ENCODE measurements at regions of chr5 and their contacts with region 1.

Region 1: DNA sequence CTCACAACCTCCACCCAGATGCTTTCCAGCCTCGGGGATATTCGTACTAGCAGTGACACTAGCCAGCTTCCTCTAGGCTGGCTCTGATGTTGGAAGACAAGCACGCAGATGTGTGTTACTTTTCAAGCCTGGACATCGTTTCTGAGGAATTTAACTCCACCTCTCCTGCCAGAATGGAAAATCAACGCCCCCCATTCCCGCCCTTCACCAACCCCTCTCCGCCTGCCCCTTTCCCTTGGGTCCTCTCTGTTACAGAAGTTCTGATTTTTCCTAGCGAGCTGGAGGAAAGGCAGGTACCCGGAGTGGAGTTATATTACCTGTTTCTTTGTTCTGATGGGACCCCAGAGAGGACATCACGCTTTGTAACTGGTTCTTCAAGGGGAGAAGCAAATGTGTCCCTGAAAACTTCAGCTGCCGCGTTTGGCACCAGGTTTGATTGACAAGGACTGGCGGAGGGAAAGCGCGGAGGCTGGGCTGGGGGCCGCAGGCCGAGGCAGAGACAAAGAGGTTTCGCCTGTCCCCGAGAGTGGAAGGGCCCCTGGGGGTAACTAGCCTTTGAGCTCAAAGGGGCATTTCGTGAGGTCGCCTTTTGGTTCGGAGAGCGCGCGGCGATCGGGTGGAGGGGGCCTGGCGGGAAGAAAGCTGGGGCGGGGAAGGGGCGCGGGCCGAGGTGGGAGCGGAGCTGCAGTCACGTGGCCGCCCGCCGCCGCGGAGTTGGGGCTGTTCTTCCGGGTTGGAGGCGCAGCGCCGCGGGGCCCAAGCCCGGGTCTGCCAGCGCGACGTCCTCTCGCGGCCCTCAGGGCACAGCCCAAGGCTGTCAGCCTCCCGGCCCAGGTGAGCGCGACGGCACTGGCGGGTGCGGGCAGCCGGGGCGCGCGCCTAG is at the start of gene NNT:
- DNase-seq: peak; percentile 76
- ATAC-seq: peak; percentile 69
- H3K4me3 Mint-ChIP-seq: peak within 1 kb of the TSS; percentile 95
- H3K27ac Mint-ChIP-seq: peak within 1 kb of the TSS; percentile 93
- H3K4me1 Mint-ChIP-seq: peaks cover 42% of the 10 kb centered on the region
- H3K27me3 Mint-ChIP-seq: no peaks in the 10 kb centered on the region
- CTCF ChIP-seq: no peak
- total RNA-seq, gene NNT: 59.0 and 63.0 TPM in 2 replicates

Region 2: GRCh38 chr5:41903892-41904799 is 1698.6 kb before region 1 on chr5 and contains the start of gene RIMOC1:
- CTCF ChIA-PET with region 1: no interaction called
- POLR2A ChIA-PET with region 1: interaction called, 3 read pairs
- intact Hi-C with region 1: loop called (anchors 1 kb)
- DNase-seq: peak; percentile 97
- ATAC-seq: peak; percentile 92
- H3K4me3 Mint-ChIP-seq: peak within 1 kb of the TSS; percentile 99
- H3K27ac Mint-ChIP-seq: peak within 1 kb of the TSS; percentile 99
- H3K4me1 Mint-ChIP-seq: peaks cover 34% of the 10 kb centered on the region
- H3K27me3 Mint-ChIP-seq: peaks cover 4% of the 10 kb centered on the region
- CTCF ChIP-seq: no peak
- total RNA-seq, gene RIMOC1: 26.0 and 30.2 TPM in 2 replicates

Region 3: GRCh38 chr5:43008369-43009153 is 594.1 kb before region 1 on chr5:
- CTCF ChIA-PET with region 1: no interaction called
- POLR2A ChIA-PET with region 1: no interaction called
- intact Hi-C with region 1: loop called (anchors 5 kb)
- DNase-seq: peak; percentile 77
- ATAC-seq: peak; percentile 53
- H3K4me3 Mint-ChIP-seq: peak overlapping the region; percentile 89
- H3K27ac Mint-ChIP-seq: peak overlapping the region; percentile 98
- H3K4me1 Mint-ChIP-seq: peaks cover 31% of the 10 kb centered on the region
- H3K27me3 Mint-ChIP-seq: no peaks in the 10 kb centered on the region
- CTCF ChIP-seq: no peak

Region 4: GRCh38 chr5:43073597-43074546 is 528.8 kb before region 1 on chr5:
- CTCF ChIA-PET with region 1: no interaction called
- POLR2A ChIA-PET with region 1: no interaction called
- intact Hi-C with region 1: loop called (anchors 2 kb)
- DNase-seq: no peak
- ATAC-seq: peak; percentile 75
- H3K4me3 Mint-ChIP-seq: no peak overlapping the region
- H3K27ac Mint-ChIP-seq: peak overlapping the region; percentile 38
- H3K4me1 Mint-ChIP-seq: peaks cover 26% of the 10 kb centered on the region
- H3K27me3 Mint-ChIP-seq: no peaks in the 10 kb centered on the region
- CTCF ChIP-seq: no peak

Region 5: DNA sequence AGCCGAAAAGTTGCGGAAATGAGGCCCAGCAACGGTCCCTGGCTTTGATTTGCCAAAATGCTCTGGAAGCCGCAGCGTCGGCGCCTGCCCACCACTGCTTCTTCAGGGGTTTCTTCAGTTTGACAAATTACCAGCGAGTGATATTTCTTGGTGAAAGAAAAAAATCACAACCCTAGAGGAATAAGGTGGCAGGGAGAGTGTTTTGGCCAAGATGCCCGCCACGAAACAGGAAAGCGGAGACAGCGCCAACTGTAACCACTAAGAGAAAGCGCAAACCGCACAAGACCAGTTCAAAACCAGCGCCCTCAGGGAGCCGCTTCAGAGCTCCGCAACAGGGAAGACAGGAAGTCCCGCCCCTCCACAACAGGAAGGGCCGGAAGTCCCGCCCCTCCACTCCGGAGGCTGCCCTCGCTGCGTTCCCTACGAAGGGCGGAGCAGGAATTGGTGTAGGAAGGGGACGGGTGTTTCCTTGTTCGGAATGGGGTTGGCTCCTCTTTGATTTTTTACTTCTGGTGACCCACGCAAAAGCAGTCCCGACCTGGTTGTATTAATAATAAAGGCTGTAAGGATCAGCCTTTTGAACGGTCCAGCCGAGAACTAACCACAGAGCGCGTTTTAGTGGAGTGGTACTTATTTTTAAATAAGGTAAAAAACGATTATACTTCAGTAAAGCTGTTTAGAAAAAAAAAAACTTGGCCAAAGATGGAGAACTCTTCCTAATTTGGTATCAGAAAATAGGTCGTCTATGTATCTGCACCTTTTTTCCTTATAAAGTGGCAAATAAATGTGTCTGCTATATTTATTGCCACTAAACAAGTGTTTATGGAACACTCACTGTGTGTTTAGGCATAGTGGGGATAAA is 87.7 kb before region 1 on chr5 and contains the start of gene C5orf34:
- CTCF ChIA-PET with region 1: interaction called, 3 read pairs
- POLR2A ChIA-PET with region 1: interaction called, 27 read pairs
- intact Hi-C with region 1: loop called (anchors 1 kb)
- DNase-seq: peak; percentile 92
- ATAC-seq: peak; percentile 96
- H3K4me3 Mint-ChIP-seq: peak within 1 kb of the TSS; percentile 95
- H3K27ac Mint-ChIP-seq: peak within 1 kb of the TSS; percentile 95
- H3K4me1 Mint-ChIP-seq: peaks cover 23% of the 10 kb centered on the region
- H3K27me3 Mint-ChIP-seq: no peaks in the 10 kb centered on the region
- CTCF ChIP-seq: no peak
- total RNA-seq, gene C5orf34: 4.4 and 4.7 TPM in 2 replicates

Region 6: DNA sequence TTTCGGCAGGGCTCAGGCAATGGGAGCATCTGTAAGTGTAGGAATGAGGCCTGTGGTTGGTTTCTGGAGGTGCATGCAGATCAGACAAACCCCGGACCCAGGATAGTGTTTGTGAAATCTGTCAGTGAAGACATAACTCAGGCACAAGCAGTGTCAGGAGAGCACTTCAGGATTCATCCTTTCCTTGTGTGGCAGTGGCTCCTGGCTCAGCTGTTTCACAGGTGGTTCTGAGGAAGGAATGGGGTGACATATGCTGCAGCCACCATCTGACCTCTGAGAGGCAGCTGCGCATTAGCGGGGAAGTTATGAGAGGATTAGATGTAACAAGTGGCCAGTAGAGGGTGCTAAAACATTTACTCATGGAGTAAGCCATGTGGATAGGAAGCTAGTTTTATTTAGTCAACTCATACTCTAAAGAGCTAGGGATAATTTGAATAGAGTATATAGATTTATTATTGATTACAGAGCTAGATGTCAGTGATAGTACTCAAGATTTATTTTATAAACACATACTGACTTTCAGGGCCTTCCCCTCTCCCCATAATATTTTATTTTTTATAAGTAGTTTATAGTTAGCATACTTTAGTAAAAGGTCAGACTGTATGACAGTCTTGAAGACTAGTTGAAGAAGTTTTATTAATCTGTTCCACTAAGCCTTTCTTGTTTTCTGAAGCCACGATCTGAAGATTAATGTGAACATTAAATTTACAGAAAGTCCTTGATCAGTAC is 28.6 kb after region 1 on chr5:
- CTCF ChIA-PET with region 1: interaction called, 11 read pairs
- POLR2A ChIA-PET with region 1: interaction called, 3 read pairs
- intact Hi-C with region 1: no loop called
- DNase-seq: peak; percentile 14
- ATAC-seq: peak; percentile 76
- H3K4me3 Mint-ChIP-seq: no peak overlapping the region
- H3K27ac Mint-ChIP-seq: no peak overlapping the region
- H3K4me1 Mint-ChIP-seq: no peaks in the 10 kb centered on the region
- H3K27me3 Mint-ChIP-seq: no peaks in the 10 kb centered on the region
- CTCF ChIP-seq: no peak

Measured in activated B cell treated with CpG ODN at 0.5 μM for 24 hours (primary cell).